ENCODE measurements at regions of chr20 and their contacts with region 1.

Region 1: GRCh38 chr20:6767536-6768227 is at the start of gene BMP2:
- DNase-seq: peak in 1 of 9 donors; percentile 31
- ATAC-seq: peak; percentile 38
- H3K4me3 ChIP-seq: no peak within 1 kb of the TSS
- H3K4me3 Mint-ChIP-seq: peak within 1 kb of the TSS in 7 of 10 donors; percentile 23 to 53 (median 38)
- H3K27ac ChIP-seq: no peak within 1 kb of the TSS
- H3K27ac Mint-ChIP-seq: no peak within 1 kb of the TSS
- H3K4me1 ChIP-seq: no peaks in the 10 kb centered on the region
- H3K4me1 Mint-ChIP-seq: peaks cover 0 to 6% (median 5%) of the 10 kb centered on the region in 7 donors
- H3K27me3 ChIP-seq: peaks cover 0 to 9% of the 10 kb centered on the region in 2 donors
- H3K27me3 Mint-ChIP-seq: peaks cover 46 to 68% (median 58%) of the 10 kb centered on the region in 5 donors
- total RNA-seq, gene BMP2: 0.08 TPM in 1 of 5 experiments, not detected in the others

Region 2: GRCh38 chr20:6395695-6396094 is 372.0 kb before region 1 on chr20:
- CTCF ChIA-PET with region 1: no interaction called
- POLR2A ChIA-PET with region 1: no interaction called
- intact Hi-C with region 1: no loop called
- DNase-seq: no peak
- ATAC-seq: no peak
- H3K4me3 ChIP-seq: no peak overlapping the region
- H3K4me3 Mint-ChIP-seq: no peak overlapping the region
- H3K27ac ChIP-seq: no peak overlapping the region
- H3K27ac Mint-ChIP-seq: no peak overlapping the region
- H3K4me1 ChIP-seq: no peaks in the 10 kb centered on the region
- H3K4me1 Mint-ChIP-seq: no peaks in the 10 kb centered on the region
- H3K27me3 ChIP-seq: no peaks in the 10 kb centered on the region
- H3K27me3 Mint-ChIP-seq: peaks cover 0 to 7% (median 0%) of the 10 kb centered on the region in 5 donors

Region 3: GRCh38 chr20:7094438-7094997 is 326.8 kb after region 1 on chr20:
- CTCF ChIA-PET with region 1: no interaction called
- POLR2A ChIA-PET with region 1: no interaction called
- intact Hi-C with region 1: loop called in 1 of 2 experiments (anchors 5 kb)
- DNase-seq: no peak
- ATAC-seq: no peak
- H3K4me3 ChIP-seq: no peak overlapping the region
- H3K4me3 Mint-ChIP-seq: no peak overlapping the region
- H3K27ac ChIP-seq: no peak overlapping the region
- H3K27ac Mint-ChIP-seq: no peak overlapping the region
- H3K4me1 ChIP-seq: no peaks in the 10 kb centered on the region
- H3K4me1 Mint-ChIP-seq: no peaks in the 10 kb centered on the region
- H3K27me3 ChIP-seq: no peaks in the 10 kb centered on the region
- H3K27me3 Mint-ChIP-seq: peaks cover 0 to 7% (median 0%) of the 10 kb centered on the region in 5 donors

Region 4: DNA sequence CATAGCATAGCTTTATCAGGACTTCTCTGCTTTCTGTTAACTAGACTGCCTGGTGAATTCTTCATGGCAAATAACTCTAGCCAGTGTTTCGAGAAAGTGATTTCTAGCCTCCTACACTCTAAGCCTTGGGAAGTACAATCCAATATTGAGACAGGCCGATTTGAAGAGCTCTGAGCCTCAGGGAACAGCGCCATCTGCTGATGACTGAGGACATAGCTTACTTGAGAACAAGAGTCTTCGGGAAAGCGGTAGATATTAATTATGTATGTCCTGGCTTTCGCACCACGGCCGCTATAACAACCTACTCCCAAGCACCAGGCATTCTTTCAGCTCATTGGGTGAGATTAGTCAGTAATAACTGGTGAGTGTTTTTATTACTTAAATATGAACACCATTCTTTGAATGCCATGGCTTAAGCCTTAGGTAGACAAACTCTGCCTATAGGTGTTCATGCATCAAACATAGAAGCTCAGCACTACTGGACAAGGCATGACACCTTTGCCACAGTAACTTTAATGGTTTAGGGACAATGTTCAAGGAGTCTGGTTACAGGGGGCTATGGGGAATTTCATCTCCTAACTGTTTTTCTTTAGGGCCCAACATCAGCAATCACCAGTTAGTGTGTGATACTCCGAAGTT is 518.4 kb after region 1 on chr20:
- CTCF ChIA-PET with region 1: no interaction called
- POLR2A ChIA-PET with region 1: no interaction called
- intact Hi-C with region 1: loop called in 1 of 2 experiments (anchors 10 kb)
- DNase-seq: peak in 1 of 9 donors; percentile 22
- ATAC-seq: no peak
- H3K4me3 ChIP-seq: no peak overlapping the region
- H3K4me3 Mint-ChIP-seq: no peak overlapping the region
- H3K27ac ChIP-seq: no peak overlapping the region
- H3K27ac Mint-ChIP-seq: no peak overlapping the region
- H3K4me1 ChIP-seq: no peaks in the 10 kb centered on the region
- H3K4me1 Mint-ChIP-seq: no peaks in the 10 kb centered on the region
- H3K27me3 ChIP-seq: no peaks in the 10 kb centered on the region
- H3K27me3 Mint-ChIP-seq: no peaks in the 10 kb centered on the region

Region 5: GRCh38 chr20:7375905-7376304 is 608.2 kb after region 1 on chr20:
- CTCF ChIA-PET with region 1: no interaction called
- POLR2A ChIA-PET with region 1: no interaction called
- intact Hi-C with region 1: loop called in 1 of 2 experiments (anchors 10 kb)
- DNase-seq: peak in 1 of 9 donors; percentile 0
- ATAC-seq: no peak
- H3K4me3 ChIP-seq: no peak overlapping the region
- H3K4me3 Mint-ChIP-seq: no peak overlapping the region
- H3K27ac ChIP-seq: no peak overlapping the region
- H3K27ac Mint-ChIP-seq: no peak overlapping the region
- H3K4me1 ChIP-seq: no peaks in the 10 kb centered on the region
- H3K4me1 Mint-ChIP-seq: no peaks in the 10 kb centered on the region
- H3K27me3 ChIP-seq: no peaks in the 10 kb centered on the region
- H3K27me3 Mint-ChIP-seq: no peaks in the 10 kb centered on the region

Region 6: DNA sequence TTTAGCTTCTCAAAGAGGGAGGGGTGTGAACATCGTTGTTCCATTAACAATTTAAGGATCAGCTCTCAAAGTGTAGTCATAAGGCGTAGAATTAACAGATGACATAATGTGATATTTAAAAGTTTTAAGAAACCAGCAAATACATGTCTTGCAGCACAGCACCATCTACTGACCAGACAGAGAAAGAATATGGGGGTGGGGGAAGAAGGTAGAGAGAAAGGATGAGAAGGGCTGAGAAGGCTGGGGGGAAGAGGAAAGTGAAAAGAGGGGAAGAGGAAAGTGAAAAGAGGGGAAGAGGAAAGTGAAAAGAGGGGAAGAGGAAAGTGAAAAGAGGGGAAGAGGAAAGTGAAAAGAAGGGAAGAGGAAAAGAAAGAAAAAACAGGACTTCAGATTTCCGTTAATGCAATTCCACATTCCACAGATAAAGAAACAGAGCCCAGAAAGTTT is 1091.7 kb after region 1 on chr20:
- CTCF ChIA-PET with region 1: no interaction called
- POLR2A ChIA-PET with region 1: no interaction called
- intact Hi-C with region 1: loop called in 1 of 2 experiments (anchors 2 kb)
- DNase-seq: peak in 1 of 9 donors; percentile 7
- ATAC-seq: no peak
- H3K4me3 ChIP-seq: no peak overlapping the region
- H3K4me3 Mint-ChIP-seq: no peak overlapping the region
- H3K27ac ChIP-seq: no peak overlapping the region
- H3K27ac Mint-ChIP-seq: no peak overlapping the region
- H3K4me1 ChIP-seq: no peaks in the 10 kb centered on the region
- H3K4me1 Mint-ChIP-seq: peaks cover 0 to 5% (median 0%) of the 10 kb centered on the region in 7 donors
- H3K27me3 ChIP-seq: no peaks in the 10 kb centered on the region
- H3K27me3 Mint-ChIP-seq: peaks cover 0 to 12% (median 4%) of the 10 kb centered on the region in 5 donors

Measured in naive thymus-derived CD4-positive, alpha-beta T cell (primary cell).